ENCODE measurements at regions of chr16 and their contacts with region 1.

Region 1: DNA sequence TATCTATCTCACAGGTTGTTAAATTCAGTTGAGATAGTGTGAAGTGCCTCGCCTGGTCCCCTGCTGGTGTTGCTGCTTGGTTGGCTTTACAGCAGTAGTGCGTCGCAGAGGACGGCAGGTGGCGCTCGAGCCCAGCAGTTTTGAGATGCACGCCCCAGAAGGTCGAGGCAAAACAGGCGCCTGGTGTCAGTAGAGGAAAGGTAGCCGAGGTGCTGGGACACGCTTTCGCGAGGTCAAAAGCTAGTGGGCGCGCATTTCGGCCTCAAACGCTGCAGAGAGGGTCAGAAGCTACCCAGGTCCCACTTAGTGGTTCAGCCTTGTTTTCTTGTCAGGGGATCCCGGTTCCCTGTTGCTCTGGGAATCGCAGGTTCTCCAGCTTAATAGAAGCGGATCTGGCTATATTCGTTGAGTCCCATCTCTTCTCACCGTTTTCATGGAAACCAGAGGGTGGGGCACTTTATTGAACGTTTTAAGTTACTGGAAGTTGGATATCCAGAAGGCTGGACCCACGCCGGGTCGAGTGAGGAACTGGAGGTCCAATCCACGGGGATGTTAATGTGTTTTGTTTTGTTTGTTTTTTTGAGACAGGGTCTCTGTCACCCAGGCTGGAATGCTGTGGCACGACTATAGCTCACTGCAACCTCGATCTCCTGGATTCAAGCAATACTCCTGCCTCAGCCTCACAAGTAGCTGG is 10.3 kb upstream of the ZFP90 start:
- DNase-seq: peak; percentile 81
- H3K4me3 Mint-ChIP-seq: peak overlapping the region; percentile 85
- H3K27ac Mint-ChIP-seq: peak overlapping the region; percentile 14
- H3K4me1 Mint-ChIP-seq: peaks cover 18% of the 10 kb centered on the region
- H3K27me3 Mint-ChIP-seq: peaks cover 4% of the 10 kb centered on the region

Region 2: DNA sequence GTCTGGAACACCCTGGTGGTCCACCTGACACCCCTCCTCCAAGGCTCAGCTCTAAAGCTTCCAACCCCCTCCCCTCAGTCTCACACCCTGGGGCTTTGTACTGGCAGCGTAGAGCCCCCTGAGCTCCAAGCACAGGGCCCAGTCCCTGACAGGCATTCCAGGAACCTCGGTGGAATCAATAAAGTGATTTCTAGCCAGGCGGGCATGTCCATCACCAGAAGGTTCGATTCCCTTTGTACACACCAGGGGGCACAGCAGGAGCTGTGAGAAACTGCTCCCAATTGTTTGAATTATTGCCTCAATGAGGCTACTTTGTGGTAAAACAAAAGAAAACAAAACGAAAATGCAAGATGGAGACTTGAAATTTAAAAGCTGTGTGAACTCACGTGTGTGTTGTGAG is 132.4 kb before region 1 on chr16:
- intact Hi-C with region 1: no loop called
- DNase-seq: peak; percentile 41
- H3K4me3 Mint-ChIP-seq: no peak overlapping the region
- H3K27ac Mint-ChIP-seq: no peak overlapping the region
- H3K4me1 Mint-ChIP-seq: peaks cover 14% of the 10 kb centered on the region
- H3K27me3 Mint-ChIP-seq: peaks cover 25% of the 10 kb centered on the region

Region 3: DNA sequence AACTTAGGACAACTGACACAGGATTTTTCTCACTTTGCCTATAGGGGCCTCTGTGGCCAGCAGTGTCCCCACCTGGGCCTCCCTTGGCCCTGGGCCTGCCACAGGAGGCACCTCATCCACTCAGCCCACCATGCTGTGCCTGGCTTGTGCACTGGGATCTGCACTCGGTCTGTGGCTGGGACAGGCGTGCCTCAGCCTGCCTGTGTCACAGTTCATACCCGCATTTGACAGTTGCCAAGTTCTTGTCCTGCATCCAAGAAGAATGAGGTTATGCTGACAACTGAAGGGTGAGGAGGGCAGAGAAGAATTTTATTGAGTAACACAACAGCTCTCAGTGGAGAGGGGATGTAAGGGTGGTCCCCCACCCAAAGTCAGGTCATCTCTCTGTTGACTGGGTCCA is 46.2 kb after region 1 on chr16:
- intact Hi-C with region 1: no loop called
- DNase-seq: no peak
- H3K4me3 Mint-ChIP-seq: no peak overlapping the region
- H3K27ac Mint-ChIP-seq: no peak overlapping the region
- H3K4me1 Mint-ChIP-seq: no peaks in the 10 kb centered on the region
- H3K27me3 Mint-ChIP-seq: no peaks in the 10 kb centered on the region

Region 4: GRCh38 chr16:68590201-68590994 is 61.6 kb after region 1 on chr16:
- intact Hi-C with region 1: loop called (anchors 2 kb)
- DNase-seq: peak; percentile 38
- H3K4me3 Mint-ChIP-seq: no peak overlapping the region
- H3K27ac Mint-ChIP-seq: no peak overlapping the region
- H3K4me1 Mint-ChIP-seq: no peaks in the 10 kb centered on the region
- H3K27me3 Mint-ChIP-seq: no peaks in the 10 kb centered on the region

Region 5: DNA sequence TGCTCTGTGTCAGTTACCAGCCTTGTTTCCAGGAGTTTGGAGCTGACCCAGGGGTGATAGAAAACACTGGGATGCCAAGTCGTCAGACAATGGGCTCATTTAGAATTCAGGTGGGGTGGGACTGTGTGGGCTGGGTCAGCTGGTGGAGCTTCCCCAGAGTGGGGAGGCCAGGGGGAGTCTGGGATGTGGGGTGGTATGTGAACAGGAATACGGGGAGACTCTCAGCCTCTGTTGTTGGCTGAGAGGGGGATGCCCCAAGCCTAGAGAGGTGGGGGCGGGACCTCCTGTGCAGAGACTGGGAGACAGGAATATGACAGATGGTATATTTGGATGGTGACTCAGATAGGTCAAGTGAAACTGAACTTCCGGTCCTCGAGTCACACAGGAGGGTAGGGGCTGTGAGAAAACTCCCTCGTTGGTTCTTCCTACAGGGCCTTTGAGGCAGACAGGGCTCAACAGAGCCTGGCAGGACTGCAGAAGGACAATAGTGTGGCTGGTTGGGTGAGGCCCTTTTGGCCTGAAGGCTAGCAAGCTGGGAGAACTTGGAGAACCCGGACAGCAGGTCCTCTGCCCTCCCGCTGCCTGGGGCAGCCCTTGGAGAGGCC is 231.9 kb after region 1 on chr16:
- intact Hi-C with region 1: loop called (anchors 5 kb)
- DNase-seq: peak; percentile 37
- H3K4me3 Mint-ChIP-seq: peak overlapping the region; percentile 8
- H3K27ac Mint-ChIP-seq: peak overlapping the region; percentile 72
- H3K4me1 Mint-ChIP-seq: peaks cover 73% of the 10 kb centered on the region
- H3K27me3 Mint-ChIP-seq: no peaks in the 10 kb centered on the region

Region 6: GRCh38 chr16:68843482-68844210 is 314.8 kb after region 1 on chr16 and contains the start of gene TANGO6:
- intact Hi-C with region 1: loop called (anchors 1 kb)
- DNase-seq: peak; percentile 87
- H3K4me3 Mint-ChIP-seq: peak within 1 kb of the TSS; percentile 94
- H3K27ac Mint-ChIP-seq: peak within 1 kb of the TSS; percentile 94
- H3K4me1 Mint-ChIP-seq: peaks cover 24% of the 10 kb centered on the region
- H3K27me3 Mint-ChIP-seq: no peaks in the 10 kb centered on the region
- total RNA-seq, gene TANGO6: 34.1 and 35.5 TPM in 2 replicates

Region 7: GRCh38 chr16:69132424-69133252 is 603.8 kb after region 1 on chr16 and contains the starts of genes CHTF8 and UTP4:
- intact Hi-C with region 1: loop called (anchors 2 kb)
- DNase-seq: peak; percentile 88
- H3K4me3 Mint-ChIP-seq: peak within 1 kb of the TSS; percentile 97
- H3K27ac Mint-ChIP-seq: peak within 1 kb of the TSS; percentile 92
- H3K4me1 Mint-ChIP-seq: peaks cover 49% of the 10 kb centered on the region
- H3K27me3 Mint-ChIP-seq: no peaks in the 10 kb centered on the region
- total RNA-seq, gene CHTF8: 134 and 143 TPM in 2 replicates
- total RNA-seq, gene UTP4: 117 and 127 TPM in 2 replicates

Measured in activated T-helper 1 cell treated with anti-CD3 and anti-CD28 coated beads, Interleukin-12 subunit alpha, Interleukin-12 subunit beta, Interleukin-2, Interleukin-4 antibody, amounts not matched to agents 30 ng/mL and 10 ng/mL and 1 ng/mL, durations not matched to agents 14 hours and 24 hours and 36 hours (primary cell).